ENCODE measurements at regions of chr22 and their contacts with region 1.

Region 1: GRCh38 chr22:26398741-26399153 is 30.3 kb upstream of the ASPHD2 start:
- DNase-seq: no peak
- ATAC-seq: no peak

Region 2: DNA sequence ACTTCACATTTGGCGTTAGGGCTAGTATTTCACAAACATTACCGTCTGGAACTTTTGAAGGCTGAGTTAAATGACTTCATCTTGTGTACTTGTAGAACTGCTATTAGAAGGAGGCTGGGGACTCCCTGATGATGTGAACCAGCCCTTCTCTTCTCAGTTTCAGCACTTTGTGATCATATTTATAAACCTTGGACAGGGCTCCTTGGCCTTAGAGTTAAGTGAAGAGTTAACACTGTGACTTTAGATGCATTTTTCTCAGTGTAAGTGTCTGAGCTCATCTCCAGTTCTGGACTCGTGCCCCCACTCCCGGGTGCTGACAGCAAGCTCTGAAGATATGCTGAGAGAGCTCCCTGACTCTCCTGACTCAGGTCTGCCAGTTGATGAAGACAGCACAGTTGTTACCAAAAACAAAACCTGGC is 267.1 kb after region 1 on chr22:
- intact Hi-C with region 1: loop called (anchors 2 kb)
- DNase-seq: no peak
- ATAC-seq: no peak

Region 3: DNA sequence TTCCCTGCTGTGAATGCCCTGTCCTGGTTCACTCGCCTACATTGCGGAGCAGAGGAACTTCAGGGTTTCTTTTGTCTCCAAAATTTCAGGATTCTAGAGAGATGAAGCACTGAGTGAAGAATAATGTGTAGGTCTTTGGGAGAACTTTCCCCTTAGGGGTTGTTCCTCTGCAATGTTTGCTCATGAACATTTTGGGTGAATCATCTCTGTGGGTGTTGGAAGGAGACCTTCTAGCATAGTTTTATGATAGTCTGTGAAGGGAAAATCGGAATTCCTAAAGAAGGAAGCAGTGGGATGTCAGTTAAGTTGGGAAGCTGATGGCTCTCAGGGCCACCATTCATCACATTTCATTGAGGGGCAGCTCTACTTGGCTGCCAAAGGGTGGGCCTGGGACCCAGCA is 323.4 kb after region 1 on chr22:
- intact Hi-C with region 1: no loop called
- DNase-seq: no peak
- ATAC-seq: no peak